Activated CD8-positive, alpha-beta T cell treated with anti-CD3 and anti-CD28 coated beads, Interleukin-2, amount 10 ng/mL, durations not matched to agents 7 days and 5 days (primary cell): ENCODE measurements at regions of chr5 and their contacts with region 1.

Region 1: DNA sequence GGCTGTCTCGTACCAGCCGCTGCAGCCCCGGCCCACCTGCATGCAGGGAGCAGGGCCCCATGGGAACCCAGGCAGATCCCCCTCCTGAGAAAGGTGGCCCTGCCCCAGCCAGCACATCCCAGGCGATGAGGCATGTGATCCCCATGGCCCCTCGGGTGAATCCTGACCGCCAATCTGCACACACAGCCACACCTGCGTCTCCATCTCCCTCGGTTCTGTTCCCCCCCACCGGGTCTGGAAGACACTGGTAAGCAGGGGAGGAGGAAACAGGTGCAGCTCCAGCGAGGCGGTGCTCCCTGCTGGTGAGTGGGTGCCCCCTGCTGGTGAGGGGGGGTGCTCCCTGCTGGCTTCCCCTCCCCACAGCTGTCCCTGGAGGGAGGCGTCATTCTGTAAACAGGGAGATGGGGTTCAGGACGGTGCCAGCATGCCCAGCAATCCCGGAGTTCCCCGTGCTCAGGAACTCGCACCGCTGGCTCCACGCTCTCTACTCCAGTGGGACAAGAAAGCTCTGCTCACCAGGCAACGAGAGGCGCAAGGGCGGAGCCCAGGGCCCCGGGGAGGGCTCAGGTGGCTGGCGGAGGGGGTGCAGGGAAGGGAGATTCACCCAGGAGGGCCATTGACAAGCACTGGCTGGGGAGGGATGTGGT is 28.4 kb upstream of the SLC12A7 start:
- DNase-seq: peak; percentile 89
- ATAC-seq: peak; percentile 92
- H3K4me3 Mint-ChIP-seq: no peak overlapping the region
- H3K27ac Mint-ChIP-seq: no peak overlapping the region
- H3K4me1 Mint-ChIP-seq: peaks cover 12% of the 10 kb centered on the region
- H3K27me3 Mint-ChIP-seq: peaks cover 3% of the 10 kb centered on the region

Region 2: GRCh38 chr5:932628-933250 is 207.6 kb before region 1 on chr5:
- CTCF ChIA-PET with region 1: interaction called, 20 read pairs
- POLR2A ChIA-PET with region 1: no interaction called
- DNase-seq: no peak
- ATAC-seq: no peak
- H3K4me3 Mint-ChIP-seq: no peak overlapping the region
- H3K27ac Mint-ChIP-seq: peak overlapping the region; percentile 37
- H3K4me1 Mint-ChIP-seq: peaks cover 28% of the 10 kb centered on the region
- H3K27me3 Mint-ChIP-seq: peaks cover 13% of the 10 kb centered on the region

Region 3: DNA sequence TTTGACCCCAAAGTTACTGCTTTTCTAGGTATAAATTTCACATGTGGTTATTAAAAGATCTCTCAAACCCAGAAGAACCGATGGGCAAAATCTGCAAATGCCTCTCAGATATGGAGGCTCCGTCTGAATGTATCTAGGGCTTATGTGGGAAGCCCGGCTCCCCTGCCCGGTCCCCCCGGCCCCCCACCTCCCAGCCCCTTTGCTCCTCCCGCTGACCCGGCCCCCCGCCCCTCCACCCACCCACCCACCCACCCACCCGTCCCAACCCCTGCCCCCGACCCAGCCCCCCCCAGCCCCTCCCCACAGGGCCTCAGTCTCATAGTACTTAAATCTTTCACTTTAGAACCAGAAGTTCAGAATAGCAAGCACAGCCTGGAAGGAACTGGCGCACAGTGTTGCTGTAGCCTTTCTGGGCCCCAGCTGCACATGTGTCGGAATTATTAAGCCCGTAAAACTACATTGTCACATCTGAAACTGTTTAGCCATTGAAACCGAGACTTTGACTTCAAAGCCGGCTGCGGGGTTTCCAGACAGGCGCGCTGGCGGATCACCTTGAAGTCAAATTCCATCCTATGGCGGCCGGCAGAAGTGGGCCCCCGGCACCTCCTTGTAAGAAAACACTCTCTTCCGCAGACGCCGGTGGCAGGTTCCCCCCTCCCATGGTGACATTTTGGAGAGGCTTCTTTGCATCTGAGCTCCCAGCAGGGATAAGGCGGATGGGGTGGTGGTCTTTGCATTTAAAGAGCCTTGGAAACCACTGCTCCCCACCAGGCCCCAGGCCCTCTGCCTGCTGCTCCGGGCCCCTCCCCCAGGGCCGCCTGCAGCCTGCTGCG is 118.9 kb before region 1 on chr5:
- CTCF ChIA-PET with region 1: no interaction called
- POLR2A ChIA-PET with region 1: no interaction called
- DNase-seq: no peak
- ATAC-seq: no peak
- H3K4me3 Mint-ChIP-seq: no peak overlapping the region
- H3K27ac Mint-ChIP-seq: no peak overlapping the region
- H3K4me1 Mint-ChIP-seq: no peaks in the 10 kb centered on the region
- H3K27me3 Mint-ChIP-seq: no peaks in the 10 kb centered on the region

Region 4: GRCh38 chr5:1105350-1106265 is 34.7 kb before region 1 on chr5:
- CTCF ChIA-PET with region 1: interaction called, 11 read pairs
- POLR2A ChIA-PET with region 1: interaction called, 3 read pairs
- DNase-seq: peak; percentile 87
- ATAC-seq: peak; percentile 63
- H3K4me3 Mint-ChIP-seq: peak overlapping the region; percentile 88
- H3K27ac Mint-ChIP-seq: peak overlapping the region; percentile 98
- H3K4me1 Mint-ChIP-seq: peaks cover 87% of the 10 kb centered on the region
- H3K27me3 Mint-ChIP-seq: no peaks in the 10 kb centered on the region

Region 5: GRCh38 chr5:1152156-1152555 is 11.9 kb after region 1 on chr5:
- CTCF ChIA-PET with region 1: interaction called, 12 read pairs
- POLR2A ChIA-PET with region 1: no interaction called
- DNase-seq: peak; percentile 56
- ATAC-seq: peak; percentile 55
- H3K4me3 Mint-ChIP-seq: no peak overlapping the region
- H3K27ac Mint-ChIP-seq: peak overlapping the region; percentile 67
- H3K4me1 Mint-ChIP-seq: peaks cover 31% of the 10 kb centered on the region
- H3K27me3 Mint-ChIP-seq: peaks cover 26% of the 10 kb centered on the region